ENCODE measurements at regions of chr19 and their contacts with region 1.

Region 1: GRCh38 chr19:2151339-2152229 is at the start of gene AP3D1:
- DNase-seq: peak; percentile 100
- ATAC-seq: peak; percentile 98
- H3K4me3 ChIP-seq: peak within 1 kb of the TSS; percentile 71 to 78
- H3K27ac ChIP-seq: peak within 1 kb of the TSS in 1 of 2 donors; percentile 39
- H3K4me1 ChIP-seq: no peaks in the 10 kb centered on the region
- H3K27me3 ChIP-seq: no peaks in the 10 kb centered on the region
- total RNA-seq, gene AP3D1: 74.8 to 84.3 TPM

Region 2: GRCh38 chr19:2096480-2097329 is 54.9 kb before region 1 on chr19 and contains the start of gene IZUMO4:
- intact Hi-C with region 1: loop called in 1 of 2 experiments (anchors 5 kb)
- DNase-seq: peak; percentile 99 to 100
- ATAC-seq: peak; percentile 95
- H3K4me3 ChIP-seq: peak within 1 kb of the TSS; percentile 37 to 44
- H3K27ac ChIP-seq: peak within 1 kb of the TSS in 1 of 2 donors; percentile 55
- H3K4me1 ChIP-seq: no peaks in the 10 kb centered on the region
- H3K27me3 ChIP-seq: no peaks in the 10 kb centered on the region
- total RNA-seq, gene IZUMO4: 1.6 to 3.6 TPM

Region 3: DNA sequence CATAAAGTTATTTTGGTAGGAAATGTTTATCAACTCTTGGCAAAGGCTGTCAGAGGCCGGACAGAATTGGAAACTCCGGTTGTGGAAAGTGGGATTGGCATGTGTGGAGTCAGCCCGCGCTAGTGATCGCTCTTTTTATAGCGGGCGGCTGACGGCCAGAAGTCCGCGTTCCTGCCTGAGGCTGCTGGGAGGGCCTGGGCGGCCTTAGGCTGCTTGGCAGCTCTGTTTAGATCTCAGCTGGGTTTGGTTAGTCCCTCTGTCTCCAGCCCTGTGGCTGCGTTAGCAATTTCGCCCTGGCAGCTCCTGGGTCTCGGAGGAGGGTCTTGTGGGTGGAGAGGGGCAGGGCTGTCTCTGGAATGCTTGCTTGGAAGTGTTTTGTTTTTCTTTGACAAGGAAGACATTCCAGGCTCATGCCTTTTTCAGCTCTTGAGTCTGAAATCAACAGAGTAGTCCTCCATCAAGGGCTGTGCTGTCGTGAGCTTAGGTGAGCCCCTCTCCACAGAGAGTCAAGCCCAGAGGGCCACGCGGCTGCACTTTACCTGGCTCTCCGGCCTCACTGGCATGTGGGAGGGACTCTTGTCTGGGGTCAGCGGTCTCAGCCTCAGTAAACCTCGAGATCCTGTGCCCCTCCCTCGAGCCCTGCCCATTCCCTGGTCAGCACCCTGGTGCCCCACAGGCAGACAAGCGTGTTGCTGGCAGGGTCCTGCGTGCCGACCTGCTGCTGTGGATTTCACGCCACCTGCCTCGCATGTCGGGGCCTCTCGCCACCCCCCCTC is 34.7 kb after region 1 on chr19:
- intact Hi-C with region 1: no loop called
- DNase-seq: peak; percentile 94 to 95
- ATAC-seq: peak; percentile 92
- H3K4me3 ChIP-seq: no peak overlapping the region
- H3K27ac ChIP-seq: peak overlapping the region; percentile 1 to 48
- H3K4me1 ChIP-seq: no peaks in the 10 kb centered on the region
- H3K27me3 ChIP-seq: no peaks in the 10 kb centered on the region

Region 4: GRCh38 chr19:2199215-2199614 is 47.6 kb after region 1 on chr19:
- intact Hi-C with region 1: loop called in 1 of 2 experiments (anchors 5 kb)
- DNase-seq: no peak
- ATAC-seq: no peak
- H3K4me3 ChIP-seq: no peak overlapping the region
- H3K27ac ChIP-seq: no peak overlapping the region
- H3K4me1 ChIP-seq: no peaks in the 10 kb centered on the region
- H3K27me3 ChIP-seq: no peaks in the 10 kb centered on the region

Region 5: GRCh38 chr19:2269244-2269947 is 117.8 kb after region 1 on chr19:
- intact Hi-C with region 1: loop called (anchors 2 to 5 kb)
- DNase-seq: peak; percentile 99
- ATAC-seq: peak; percentile 92
- H3K4me3 ChIP-seq: peak overlapping the region; percentile 49 to 96
- H3K27ac ChIP-seq: peak overlapping the region in 1 of 2 donors; percentile 93
- H3K4me1 ChIP-seq: no peaks in the 10 kb centered on the region
- H3K27me3 ChIP-seq: no peaks in the 10 kb centered on the region

Region 6: DNA sequence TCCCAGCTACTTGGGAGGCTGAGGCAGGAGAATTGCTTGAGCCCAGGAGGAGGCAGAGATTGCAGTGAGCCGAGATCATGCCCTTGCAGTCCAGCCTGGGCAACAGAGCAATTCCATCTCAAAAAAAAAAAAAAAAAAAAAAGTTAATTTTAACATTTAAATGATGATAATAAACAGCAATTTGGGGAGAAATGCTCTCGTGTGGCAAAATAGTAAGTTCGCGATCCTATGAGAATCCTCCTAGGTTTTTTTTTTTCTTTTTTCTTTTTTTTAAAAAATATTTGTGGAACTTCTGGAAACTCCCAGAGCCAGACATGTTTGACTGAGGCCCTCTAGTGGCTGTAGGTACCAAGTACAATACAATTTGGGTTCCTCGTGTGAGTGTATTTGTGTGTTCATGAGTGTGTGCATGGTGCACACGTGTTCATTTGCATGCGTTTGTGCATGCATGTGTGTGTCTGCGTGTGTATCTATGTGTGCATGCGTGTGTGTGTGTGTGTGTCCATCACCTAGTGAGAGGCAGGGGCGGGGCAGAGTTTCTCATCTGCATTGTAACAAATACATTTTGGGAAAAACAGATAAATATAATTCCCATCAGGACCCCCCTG is 239.6 kb after region 1 on chr19:
- intact Hi-C with region 1: loop called (anchors 5 kb)
- DNase-seq: no peak
- ATAC-seq: peak; percentile 79
- H3K4me3 ChIP-seq: no peak overlapping the region
- H3K27ac ChIP-seq: no peak overlapping the region
- H3K4me1 ChIP-seq: no peaks in the 10 kb centered on the region
- H3K27me3 ChIP-seq: no peaks in the 10 kb centered on the region